Mucosa of descending colon (tissue), 3 donors: ENCODE measurements at regions of chr16 and their contacts with region 1.

Region 1: GRCh38 chr16:71746442-71747046 is 22.0 kb upstream of the PHLPP2 start:
- DNase-seq: peak in 1 of 3 donors; percentile 69
- ATAC-seq: peak; percentile 81
- H3K4me3 ChIP-seq: no peak overlapping the region
- H3K4me1 ChIP-seq: no peaks in the 10 kb centered on the region
- CTCF ChIP-seq: peak; percentile 36

Region 2: DNA sequence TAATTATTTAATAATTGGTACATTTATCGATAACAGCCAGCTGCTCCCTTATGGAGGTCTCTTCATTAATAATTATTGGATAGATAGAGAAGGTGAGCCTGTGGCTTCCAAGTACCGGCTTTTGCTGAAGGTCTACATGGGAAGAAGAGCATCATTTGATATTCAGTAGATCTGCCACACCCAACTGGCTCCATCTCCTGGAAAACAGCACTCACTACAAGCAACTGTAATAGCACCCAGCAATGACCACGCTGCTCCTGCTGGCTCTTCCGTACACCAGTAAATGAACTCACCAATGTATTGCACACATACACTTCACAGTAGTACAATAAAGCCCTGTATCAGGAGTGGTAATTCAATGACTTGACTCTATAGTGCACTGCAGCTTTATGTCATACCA is 101.1 kb before region 1 on chr16:
- intact Hi-C with region 1: loop called in 1 of 2 experiments (anchors 5 kb)
- DNase-seq: peak in 1 of 3 donors; percentile 51
- ATAC-seq: peak; percentile 89
- H3K4me3 ChIP-seq: no peak overlapping the region
- H3K4me1 ChIP-seq: no peaks in the 10 kb centered on the region
- CTCF ChIP-seq: peak; percentile 13